ENCODE measurements at regions of chr11 and their contacts with region 1.

Region 1: DNA sequence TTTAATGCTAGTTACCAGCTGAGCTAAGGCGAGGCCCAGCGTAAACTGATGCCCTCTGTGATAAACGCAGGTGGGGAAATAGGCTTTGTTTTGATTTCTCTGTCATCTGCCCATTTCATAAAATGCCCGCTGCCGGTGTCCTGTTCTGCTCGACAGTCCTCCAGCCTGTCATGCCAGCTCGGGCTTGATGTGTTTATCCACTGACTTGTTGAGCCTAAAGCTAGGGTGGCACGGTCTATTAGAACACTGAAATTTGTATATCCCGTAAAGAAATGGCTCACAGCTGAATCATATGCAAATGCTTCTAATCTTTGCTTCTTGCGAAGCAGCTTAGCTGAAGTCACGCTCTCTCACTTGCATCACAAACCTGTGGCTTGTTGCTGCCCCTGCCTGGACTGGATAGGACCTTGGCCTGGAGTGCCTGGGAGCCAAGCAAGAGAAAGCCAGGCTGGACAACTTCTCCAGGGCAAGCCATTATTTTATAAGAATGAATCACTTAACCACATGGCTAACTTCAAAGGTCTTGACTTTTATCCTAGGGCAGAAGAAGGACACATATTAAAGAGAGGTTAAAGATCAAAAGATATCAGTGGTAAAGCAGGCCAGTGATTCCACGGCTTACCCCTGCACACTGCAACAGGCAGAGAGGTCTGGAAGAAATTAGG is 33.1 kb downstream of the EHF start:
- DNase-seq: no peak
- ATAC-seq: no peak
- H3K4me3 ChIP-seq: no peak overlapping the region
- H3K27ac ChIP-seq: no peak overlapping the region
- H3K4me1 ChIP-seq: no peaks in the 10 kb centered on the region
- H3K27me3 ChIP-seq: no peaks in the 10 kb centered on the region

Region 2: DNA sequence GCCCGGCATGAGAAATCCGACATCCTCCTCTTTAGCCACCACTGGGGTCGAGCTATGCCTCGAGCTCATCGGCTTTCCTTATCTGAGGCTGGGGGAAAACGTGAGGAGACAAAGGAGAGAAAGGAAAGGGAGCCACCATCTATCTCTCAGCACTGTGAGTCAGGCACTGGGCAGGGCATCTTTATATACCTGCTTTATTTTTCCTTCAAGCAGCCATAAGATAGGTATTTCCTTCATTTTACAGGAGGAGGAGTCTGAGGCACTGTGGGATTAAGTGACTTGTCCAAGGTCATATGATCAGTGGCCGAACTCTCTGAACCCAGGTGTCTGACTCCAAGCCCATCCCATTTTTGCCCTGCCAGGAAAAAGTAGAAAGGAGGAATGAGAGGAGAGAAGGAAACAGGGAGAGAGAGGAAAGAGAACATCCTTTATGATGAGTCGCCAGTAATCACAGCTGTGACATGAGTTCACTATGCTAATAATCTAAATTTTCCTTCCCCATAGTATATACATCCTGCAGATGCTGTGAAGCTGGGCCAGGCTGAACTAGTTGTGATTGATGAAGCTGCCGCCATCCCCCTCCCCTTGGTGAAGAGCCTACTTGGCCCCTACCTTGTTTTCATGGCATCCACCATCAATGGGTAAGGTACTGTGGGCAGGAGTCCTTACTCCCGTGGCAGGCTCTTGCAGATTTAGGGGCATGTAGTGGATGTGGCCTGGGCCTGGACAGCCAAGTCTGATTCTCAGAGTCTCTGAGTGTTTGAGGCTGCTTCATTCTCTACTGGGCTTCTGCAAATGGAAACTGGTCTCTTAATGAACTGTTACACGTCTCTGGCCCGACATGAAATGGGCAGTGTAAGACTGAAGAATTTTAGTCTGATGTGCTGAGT is 526.8 kb before region 1 on chr11:
- intact Hi-C with region 1: no loop called
- DNase-seq: no peak
- ATAC-seq: no peak
- H3K4me3 ChIP-seq: no peak overlapping the region
- H3K27ac ChIP-seq: no peak overlapping the region
- H3K4me1 ChIP-seq: no peaks in the 10 kb centered on the region
- H3K27me3 ChIP-seq: no peaks in the 10 kb centered on the region

Region 3: DNA sequence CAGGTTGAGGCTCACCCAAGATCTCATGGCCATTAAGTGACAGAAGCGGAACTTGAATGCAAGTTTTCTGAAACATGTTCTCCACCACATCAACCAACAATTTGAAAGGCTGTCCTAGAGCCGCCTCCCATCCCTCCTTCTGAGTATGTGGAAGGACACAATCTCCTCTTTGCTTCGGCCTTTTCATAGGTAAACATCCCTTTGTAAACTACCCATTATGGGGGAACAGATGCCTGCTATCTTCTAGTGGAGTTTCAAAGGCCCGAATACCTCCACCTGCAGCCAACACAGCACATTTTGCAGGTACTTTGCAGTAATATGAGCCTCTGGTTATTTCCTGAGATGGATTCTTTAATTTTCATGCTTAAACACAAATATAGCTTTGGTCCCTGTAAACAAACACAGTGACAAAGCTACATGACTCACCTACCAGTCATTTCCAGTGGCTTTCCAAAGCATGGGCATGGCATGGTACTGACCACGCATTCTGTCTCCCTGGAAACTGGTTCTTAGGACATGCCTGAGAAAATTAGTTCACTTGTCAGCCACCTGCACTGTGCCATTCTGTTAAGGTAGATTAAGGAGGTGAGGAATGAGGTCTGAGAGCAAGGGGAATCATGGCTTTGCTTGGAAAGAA is 27.1 kb after region 1 on chr11:
- intact Hi-C with region 1: no loop called
- DNase-seq: no peak
- ATAC-seq: no peak
- H3K4me3 ChIP-seq: no peak overlapping the region
- H3K27ac ChIP-seq: no peak overlapping the region
- H3K4me1 ChIP-seq: no peaks in the 10 kb centered on the region
- H3K27me3 ChIP-seq: peaks cover 0 to 1% of the 10 kb centered on the region in 2 donors

Region 4: DNA sequence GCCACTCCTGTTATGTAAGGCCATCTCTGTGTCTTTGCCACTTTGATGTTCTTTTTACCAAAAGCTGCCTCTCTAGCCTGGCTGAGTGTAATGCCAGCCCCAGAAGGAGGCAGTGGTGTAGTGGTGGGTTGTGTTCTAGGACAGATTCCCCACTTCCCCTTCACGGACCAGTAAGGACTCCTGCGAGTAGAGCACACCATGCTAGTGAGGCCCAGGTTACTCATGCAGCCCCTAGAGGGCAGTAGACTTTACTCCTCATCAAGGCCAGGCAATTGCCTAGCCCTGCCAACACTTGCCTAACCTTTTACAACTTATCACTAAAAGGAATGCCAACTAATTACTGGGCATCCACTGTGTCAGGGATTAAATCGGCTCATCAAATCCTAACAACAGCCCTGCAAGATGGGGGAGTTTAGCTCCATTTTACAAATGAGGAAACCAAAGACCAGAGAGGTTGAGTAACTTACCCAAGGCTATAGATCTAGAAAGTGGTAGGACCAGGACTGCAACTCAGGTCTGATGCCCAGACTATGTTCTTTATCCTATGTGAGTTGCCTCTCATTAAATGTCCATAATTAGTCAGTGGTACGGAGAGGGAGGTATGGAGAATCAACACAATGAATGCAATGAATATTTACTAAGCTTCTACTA is 186.9 kb after region 1 on chr11:
- intact Hi-C with region 1: loop called in 1 of 2 experiments (anchors 10 kb)
- DNase-seq: peak in 1 of 2 donors; percentile 48
- ATAC-seq: no peak
- H3K4me3 ChIP-seq: no peak overlapping the region
- H3K27ac ChIP-seq: no peak overlapping the region
- H3K4me1 ChIP-seq: no peaks in the 10 kb centered on the region
- H3K27me3 ChIP-seq: peaks cover 0 to 5% of the 10 kb centered on the region in 2 donors

Measured in aorta (tissue), 5 donors.